BJ (cell line): ENCODE measurements at regions of chr1 and their contacts with region 1.

Region 1: DNA sequence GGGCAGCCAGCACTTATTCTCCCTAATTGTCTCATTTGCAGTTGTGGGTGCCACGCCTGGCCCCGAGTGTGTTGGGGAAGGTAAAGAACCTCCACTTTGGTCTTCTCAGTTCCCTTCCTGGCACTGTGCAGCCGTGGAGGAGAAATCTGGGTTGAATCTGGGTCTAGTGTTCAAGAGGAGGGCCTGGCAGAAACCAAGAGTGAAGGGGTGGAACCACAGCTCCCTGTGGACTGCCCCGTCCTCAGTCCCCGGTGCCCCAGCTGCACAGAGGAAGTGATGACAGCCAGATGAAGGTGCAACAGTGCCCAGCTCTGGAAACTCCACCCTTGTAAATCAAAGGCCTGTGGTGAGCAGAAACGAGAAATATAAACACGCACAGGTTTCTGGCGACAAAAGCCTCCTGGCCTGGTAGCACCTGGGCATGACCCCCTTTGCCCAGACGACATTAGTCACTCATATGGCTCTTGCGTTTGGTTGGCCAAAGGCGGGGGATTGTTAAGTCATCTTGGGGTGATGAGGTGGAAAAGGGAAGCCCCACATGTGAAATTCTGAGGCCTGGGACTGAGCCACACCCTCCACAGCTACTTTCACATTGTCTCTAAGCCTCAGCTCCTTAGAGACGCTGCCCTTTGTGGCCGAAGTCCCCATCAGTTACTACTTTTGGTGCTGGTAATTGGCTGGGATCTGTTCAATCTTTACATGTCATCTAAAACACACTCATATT is 4.2 kb upstream of the ECE1 start:
- DNase-seq: no peak
- H3K4me3 ChIP-seq: no peak overlapping the region
- H3K27me3 ChIP-seq: no peaks in the 10 kb centered on the region
- CTCF ChIP-seq: no peak

Region 2: DNA sequence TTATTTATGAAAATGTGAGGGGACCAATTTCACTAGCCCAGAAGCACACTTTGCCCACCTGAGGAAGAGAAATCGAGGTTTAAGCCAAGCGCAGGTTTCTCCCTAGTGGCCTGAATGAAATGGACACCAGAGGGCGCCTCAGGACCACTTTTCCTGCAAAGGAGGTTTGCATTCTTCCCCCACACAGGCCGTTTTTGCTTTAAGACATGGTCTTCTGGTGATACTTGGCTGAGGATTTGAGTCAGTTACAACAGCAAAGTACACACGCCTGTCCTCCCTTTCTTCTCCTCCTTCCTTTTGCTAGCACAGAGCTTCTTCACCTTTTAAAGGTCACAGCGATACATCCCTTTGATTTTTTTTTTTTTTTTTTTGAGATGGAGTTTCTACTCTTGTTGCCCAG is 1376.4 kb before region 1 on chr1:
- CTCF ChIA-PET with region 1: no interaction called
- POLR2A ChIA-PET with region 1: no interaction called
- DNase-seq: no peak
- H3K4me3 ChIP-seq: no peak overlapping the region
- H3K27me3 ChIP-seq: no peaks in the 10 kb centered on the region
- CTCF ChIP-seq: peak; percentile 88

Region 3: DNA sequence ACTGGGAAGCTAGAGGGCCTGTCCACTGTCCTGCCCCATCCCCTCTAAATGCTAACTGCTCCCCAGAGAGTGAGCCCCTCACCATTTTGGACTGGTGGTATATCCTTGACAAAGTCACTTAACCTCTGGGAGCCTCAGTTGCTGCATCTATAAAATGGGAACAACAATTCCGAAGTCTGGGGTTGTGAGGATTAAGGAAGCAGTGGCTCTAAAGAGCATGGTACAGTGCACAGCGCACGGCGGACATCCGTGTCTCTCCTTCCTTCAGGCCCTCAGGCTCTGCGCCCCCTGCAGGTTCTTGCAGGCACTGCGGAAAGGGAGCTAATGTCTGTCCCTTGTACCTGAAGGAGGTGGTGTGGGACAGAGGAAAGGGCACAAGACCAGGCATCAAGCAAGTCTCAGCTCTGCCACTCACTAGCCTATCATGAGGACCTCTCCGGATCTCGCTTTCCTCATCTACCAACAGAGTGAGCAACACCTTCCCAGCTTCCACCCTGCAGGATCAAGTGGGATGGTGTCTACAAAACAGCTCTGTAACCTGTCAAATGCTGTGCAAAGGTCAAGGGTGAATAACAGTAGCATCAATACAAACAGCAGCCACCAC is 24.2 kb before region 1 on chr1:
- CTCF ChIA-PET with region 1: interaction called, 19 read pairs
- POLR2A ChIA-PET with region 1: no interaction called
- DNase-seq: no peak
- H3K4me3 ChIP-seq: no peak overlapping the region
- H3K27me3 ChIP-seq: no peaks in the 10 kb centered on the region
- CTCF ChIP-seq: peak; percentile 96